ENCODE measurements at regions of chr20 and their contacts with region 1.

Region 1: DNA sequence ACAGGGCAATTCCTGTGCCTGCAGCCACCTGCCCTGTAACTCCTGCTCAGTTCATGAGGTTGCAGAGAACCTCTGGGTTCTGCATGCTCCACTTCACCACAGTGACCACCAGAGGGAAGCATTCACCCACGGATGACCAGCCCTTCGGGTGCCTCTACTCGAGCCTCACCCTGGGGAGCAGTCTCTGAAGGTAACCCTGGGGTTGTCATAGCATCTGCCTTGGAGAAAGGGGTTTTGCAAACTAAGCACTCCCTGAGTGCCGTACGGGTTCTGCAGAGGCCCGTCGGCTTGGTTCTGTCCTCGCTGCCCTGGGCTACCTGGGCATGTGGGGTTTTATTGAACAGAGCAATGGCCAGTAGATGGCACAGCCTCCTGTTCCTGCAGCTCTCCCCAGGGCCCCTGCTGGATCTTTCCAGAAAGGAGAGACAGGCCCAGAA is 10.2 kb upstream of the CST5 start:
- H3K4me3 Mint-ChIP-seq: no peak overlapping the region
- H3K27ac Mint-ChIP-seq: no peak overlapping the region
- H3K4me1 Mint-ChIP-seq: no peaks in the 10 kb centered on the region
- H3K27me3 Mint-ChIP-seq: no peaks in the 10 kb centered on the region

Region 2: GRCh38 chr20:23800878-23801277 is 88.9 kb before region 1 on chr20:
- intact Hi-C with region 1: no loop called
- H3K4me3 Mint-ChIP-seq: no peak overlapping the region
- H3K27ac Mint-ChIP-seq: no peak overlapping the region
- H3K4me1 Mint-ChIP-seq: no peaks in the 10 kb centered on the region
- H3K27me3 Mint-ChIP-seq: no peaks in the 10 kb centered on the region

Region 3: DNA sequence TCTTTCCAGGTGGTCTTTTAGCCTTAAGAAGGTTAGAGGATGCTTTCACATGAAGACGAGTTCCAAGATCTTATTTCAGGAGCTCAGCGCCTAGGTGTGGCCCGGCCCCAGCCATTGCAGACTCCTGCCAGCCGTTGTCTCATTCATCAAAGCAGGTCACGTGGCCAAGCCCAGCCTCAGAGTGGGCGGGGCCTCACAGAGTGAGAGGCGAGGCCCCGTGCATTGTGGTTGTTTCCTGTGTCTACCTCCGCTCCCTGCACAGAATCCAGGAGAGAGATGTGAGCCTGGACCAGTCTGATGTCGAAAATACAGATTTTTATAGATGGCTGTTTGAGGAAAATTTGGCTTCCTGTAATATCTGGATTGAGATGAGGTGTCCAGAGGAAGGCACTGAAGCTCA is 39.0 kb after region 1 on chr20:
- intact Hi-C with region 1: no loop called
- H3K4me3 Mint-ChIP-seq: no peak overlapping the region
- H3K27ac Mint-ChIP-seq: no peak overlapping the region
- H3K4me1 Mint-ChIP-seq: no peaks in the 10 kb centered on the region
- H3K27me3 Mint-ChIP-seq: no peaks in the 10 kb centered on the region

Region 4: GRCh38 chr20:23995905-23996666 is 106.3 kb after region 1 on chr20:
- intact Hi-C with region 1: loop called (anchors 5 kb)
- H3K4me3 Mint-ChIP-seq: no peak overlapping the region
- H3K27ac Mint-ChIP-seq: no peak overlapping the region
- H3K4me1 Mint-ChIP-seq: no peaks in the 10 kb centered on the region
- H3K27me3 Mint-ChIP-seq: peaks cover 2% of the 10 kb centered on the region

Region 5: GRCh38 chr20:24006626-24007025 is 116.8 kb after region 1 on chr20:
- intact Hi-C with region 1: no loop called
- H3K4me3 Mint-ChIP-seq: no peak overlapping the region
- H3K27ac Mint-ChIP-seq: no peak overlapping the region
- H3K4me1 Mint-ChIP-seq: peaks cover 14% of the 10 kb centered on the region
- H3K27me3 Mint-ChIP-seq: peaks cover 1% of the 10 kb centered on the region

Region 6: DNA sequence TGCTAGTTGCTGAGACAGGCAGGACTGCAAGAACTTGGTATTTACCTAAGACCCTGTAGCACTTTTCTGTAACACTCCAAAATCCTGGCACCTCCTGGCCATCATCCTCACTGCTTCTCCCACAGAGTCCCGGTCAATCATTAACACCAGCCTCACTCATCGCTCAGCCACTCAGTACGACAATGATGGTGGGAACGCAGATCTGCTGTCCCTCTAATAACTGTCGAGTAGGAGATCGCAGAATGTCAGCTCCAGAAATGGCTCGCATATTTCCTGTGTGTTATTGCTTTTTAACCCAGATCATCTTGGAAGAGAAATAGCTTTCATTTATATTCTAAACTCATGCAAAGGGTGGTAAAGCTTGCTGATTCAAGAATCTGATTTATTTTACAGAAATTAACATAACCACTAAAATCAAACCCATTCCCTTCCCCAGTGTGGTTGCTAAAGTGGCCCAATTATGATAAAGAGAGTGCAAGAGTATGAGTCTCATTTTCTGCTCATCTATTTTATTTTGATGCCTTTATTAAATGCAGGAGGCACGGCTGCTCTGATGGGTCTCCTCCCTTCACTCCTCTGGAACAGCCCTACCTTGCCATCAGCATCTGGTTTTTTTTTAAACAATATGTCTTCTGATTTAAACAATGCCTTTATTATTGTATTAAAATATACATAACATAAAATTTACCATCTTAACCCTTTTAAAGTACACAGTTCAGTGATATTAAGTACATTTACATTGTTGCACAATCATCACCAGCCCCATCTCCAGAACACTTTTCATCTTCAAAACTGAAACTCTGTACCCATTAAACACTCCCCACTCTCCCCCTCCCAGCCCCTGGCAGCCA is 127.0 kb after region 1 on chr20:
- intact Hi-C with region 1: no loop called
- H3K4me3 Mint-ChIP-seq: no peak overlapping the region
- H3K27ac Mint-ChIP-seq: no peak overlapping the region
- H3K4me1 Mint-ChIP-seq: no peaks in the 10 kb centered on the region
- H3K27me3 Mint-ChIP-seq: peaks cover 4% of the 10 kb centered on the region